Breast epithelium (tissue), 4 donors: ENCODE measurements at regions of chr1 and their contacts with region 1.

Region 1: DNA sequence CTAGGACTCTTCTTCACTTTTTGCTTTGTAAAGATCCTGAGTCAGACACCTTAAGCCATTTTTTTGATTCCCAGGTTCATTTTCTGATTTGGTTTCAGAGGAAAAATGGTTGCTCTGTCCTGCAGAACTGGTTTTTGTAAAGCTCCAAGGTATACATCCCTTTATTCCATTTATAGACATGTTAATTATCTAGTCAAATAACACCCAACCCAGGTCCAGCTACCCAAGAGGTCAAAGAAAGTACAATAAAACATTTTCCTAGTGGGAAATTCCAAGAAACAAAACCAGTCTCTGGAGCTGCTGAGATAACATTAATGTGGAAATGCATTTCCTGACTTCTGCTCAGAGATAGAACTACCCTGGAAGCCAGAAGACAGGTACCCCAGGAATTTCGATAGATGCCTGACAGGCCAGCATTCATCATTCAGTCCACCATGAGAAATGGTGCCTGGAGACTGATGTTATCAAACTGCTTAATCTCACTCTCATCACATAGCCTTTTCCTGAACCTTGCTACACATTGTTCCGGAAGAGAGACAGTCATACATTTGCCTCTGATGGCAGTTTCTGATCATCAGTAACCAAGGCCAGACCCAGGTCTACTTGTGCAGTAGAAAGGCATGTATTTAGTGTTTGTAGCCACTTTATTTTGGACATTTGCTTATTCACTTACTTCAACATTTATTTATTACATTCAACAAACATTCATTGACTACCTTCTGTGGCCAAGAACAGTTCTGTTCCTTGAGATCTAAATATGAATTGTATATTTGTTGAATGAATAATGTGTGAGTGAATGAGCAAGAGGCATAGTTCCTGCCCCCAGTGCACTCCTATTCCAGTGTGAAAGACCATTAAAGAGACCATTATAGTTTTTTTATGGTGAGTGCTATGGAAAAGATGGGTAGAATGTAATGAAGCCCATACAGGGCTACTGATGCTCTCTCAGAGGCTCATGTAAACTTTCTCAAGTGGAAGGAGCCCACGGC is 485.6 kb downstream of the NUF2 start:
- DNase-seq: no peak
- H3K4me3 ChIP-seq: no peak overlapping the region
- H3K27ac ChIP-seq: no peak overlapping the region
- H3K4me1 ChIP-seq: no peaks in the 10 kb centered on the region
- H3K27me3 ChIP-seq: no peaks in the 10 kb centered on the region
- CTCF ChIP-seq: no peak
- POLR2A ChIP-seq: no peak

Region 2: DNA sequence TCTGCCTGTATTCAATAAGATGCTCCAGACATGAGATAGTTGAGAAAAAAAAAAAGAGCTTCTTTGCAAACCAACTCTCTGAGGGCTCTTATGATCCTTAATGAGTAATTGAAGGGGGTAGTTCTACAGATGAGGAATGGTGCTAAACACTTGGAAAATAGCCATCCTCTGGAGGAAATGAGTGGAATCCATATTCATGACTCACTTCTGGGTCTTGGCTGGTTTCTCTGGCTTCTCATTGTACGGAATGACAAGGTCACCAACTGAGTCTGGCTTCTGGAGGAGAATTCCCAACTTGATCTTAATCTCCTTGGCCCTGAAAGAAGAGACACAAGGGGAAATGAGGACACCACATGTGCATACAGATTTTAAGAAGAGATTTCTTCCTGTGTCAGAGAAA is 639.3 kb before region 1 on chr1:
- intact Hi-C with region 1: no loop called
- DNase-seq: no peak
- H3K4me3 ChIP-seq: no peak overlapping the region
- H3K27ac ChIP-seq: peak overlapping the region in 1 of 2 donors; percentile 18
- H3K4me1 ChIP-seq: no peaks in the 10 kb centered on the region
- H3K27me3 ChIP-seq: no peaks in the 10 kb centered on the region
- CTCF ChIP-seq: no peak
- POLR2A ChIP-seq: no peak

Region 3: GRCh38 chr1:163863731-163864130 is 56.4 kb after region 1 on chr1:
- intact Hi-C with region 1: loop called (anchors 2 kb)
- DNase-seq: no peak
- H3K4me3 ChIP-seq: no peak overlapping the region
- H3K27ac ChIP-seq: no peak overlapping the region
- H3K4me1 ChIP-seq: no peaks in the 10 kb centered on the region
- H3K27me3 ChIP-seq: no peaks in the 10 kb centered on the region
- CTCF ChIP-seq: no peak
- POLR2A ChIP-seq: no peak

Region 4: GRCh38 chr1:164210211-164210739 is 402.9 kb after region 1 on chr1:
- intact Hi-C with region 1: no loop called
- DNase-seq: no peak
- H3K4me3 ChIP-seq: no peak overlapping the region
- H3K27ac ChIP-seq: no peak overlapping the region
- H3K4me1 ChIP-seq: no peaks in the 10 kb centered on the region
- H3K27me3 ChIP-seq: no peaks in the 10 kb centered on the region
- CTCF ChIP-seq: no peak
- POLR2A ChIP-seq: no peak